Activated T-helper 1 cell treated with anti-CD3 and anti-CD28 coated beads, Interleukin-12 subunit alpha, Interleukin-12 subunit beta, Interleukin-2, Interleukin-4 antibody, amounts not matched to agents 30 ng/mL and 10 ng/mL and 1 ng/mL, durations not matched to agents 14 hours and 24 hours and 36 hours (primary cell): ENCODE measurements at regions of chr4 and their contacts with region 1.

Region 1: DNA sequence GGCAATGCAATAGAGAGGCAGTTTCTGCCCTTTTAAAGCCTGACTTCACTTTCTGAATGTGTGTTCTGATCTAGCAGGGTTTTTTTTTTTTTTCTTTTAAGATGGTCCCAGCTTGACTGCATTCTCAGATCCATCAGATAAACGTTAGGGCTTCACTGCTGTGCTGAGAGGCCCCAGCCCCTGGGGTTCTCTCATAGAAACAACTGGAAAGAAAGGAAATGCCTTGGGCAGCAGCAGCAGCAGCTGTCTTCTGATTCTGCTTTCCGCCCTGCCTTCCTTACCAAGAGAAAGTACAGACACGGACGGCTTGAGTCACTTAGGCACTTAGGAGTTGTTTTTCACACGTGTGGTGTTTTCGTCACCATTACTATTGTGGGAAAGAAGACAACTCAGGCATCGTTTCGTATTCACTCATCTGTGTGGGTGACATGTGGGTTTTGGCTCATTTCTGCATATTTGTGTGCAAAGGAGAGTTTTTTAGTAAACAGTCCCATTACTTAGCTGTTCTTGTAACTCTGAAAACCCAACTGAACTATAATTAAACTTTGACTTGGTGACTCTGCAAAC is 172.0 kb downstream of the PTTG2 start:
- DNase-seq: peak; percentile 80
- H3K4me3 Mint-ChIP-seq: peak overlapping the region; percentile 64
- H3K27ac Mint-ChIP-seq: peak overlapping the region; percentile 94
- H3K4me1 Mint-ChIP-seq: peaks cover 84% of the 10 kb centered on the region
- H3K27me3 Mint-ChIP-seq: peaks cover 3% of the 10 kb centered on the region

Region 2: GRCh38 chr4:36285784-36286480 is 1846.3 kb before region 1 on chr4:
- intact Hi-C with region 1: loop called (anchors 1 kb)
- DNase-seq: peak; percentile 79
- H3K4me3 Mint-ChIP-seq: peak overlapping the region; percentile 49
- H3K27ac Mint-ChIP-seq: peak overlapping the region; percentile 95
- H3K4me1 Mint-ChIP-seq: peaks cover 78% of the 10 kb centered on the region
- H3K27me3 Mint-ChIP-seq: peaks cover 2% of the 10 kb centered on the region

Region 3: GRCh38 chr4:37561803-37562207 is 570.4 kb before region 1 on chr4:
- intact Hi-C with region 1: no loop called
- DNase-seq: no peak
- H3K4me3 Mint-ChIP-seq: no peak overlapping the region
- H3K27ac Mint-ChIP-seq: no peak overlapping the region
- H3K4me1 Mint-ChIP-seq: no peaks in the 10 kb centered on the region
- H3K27me3 Mint-ChIP-seq: peaks cover 4% of the 10 kb centered on the region

Region 4: GRCh38 chr4:37879365-37879764 is 252.8 kb before region 1 on chr4:
- intact Hi-C with region 1: no loop called
- DNase-seq: no peak
- H3K4me3 Mint-ChIP-seq: no peak overlapping the region
- H3K27ac Mint-ChIP-seq: no peak overlapping the region
- H3K4me1 Mint-ChIP-seq: peaks cover under 1% of the 10 kb centered on the region
- H3K27me3 Mint-ChIP-seq: peaks cover 14% of the 10 kb centered on the region

Region 5: DNA sequence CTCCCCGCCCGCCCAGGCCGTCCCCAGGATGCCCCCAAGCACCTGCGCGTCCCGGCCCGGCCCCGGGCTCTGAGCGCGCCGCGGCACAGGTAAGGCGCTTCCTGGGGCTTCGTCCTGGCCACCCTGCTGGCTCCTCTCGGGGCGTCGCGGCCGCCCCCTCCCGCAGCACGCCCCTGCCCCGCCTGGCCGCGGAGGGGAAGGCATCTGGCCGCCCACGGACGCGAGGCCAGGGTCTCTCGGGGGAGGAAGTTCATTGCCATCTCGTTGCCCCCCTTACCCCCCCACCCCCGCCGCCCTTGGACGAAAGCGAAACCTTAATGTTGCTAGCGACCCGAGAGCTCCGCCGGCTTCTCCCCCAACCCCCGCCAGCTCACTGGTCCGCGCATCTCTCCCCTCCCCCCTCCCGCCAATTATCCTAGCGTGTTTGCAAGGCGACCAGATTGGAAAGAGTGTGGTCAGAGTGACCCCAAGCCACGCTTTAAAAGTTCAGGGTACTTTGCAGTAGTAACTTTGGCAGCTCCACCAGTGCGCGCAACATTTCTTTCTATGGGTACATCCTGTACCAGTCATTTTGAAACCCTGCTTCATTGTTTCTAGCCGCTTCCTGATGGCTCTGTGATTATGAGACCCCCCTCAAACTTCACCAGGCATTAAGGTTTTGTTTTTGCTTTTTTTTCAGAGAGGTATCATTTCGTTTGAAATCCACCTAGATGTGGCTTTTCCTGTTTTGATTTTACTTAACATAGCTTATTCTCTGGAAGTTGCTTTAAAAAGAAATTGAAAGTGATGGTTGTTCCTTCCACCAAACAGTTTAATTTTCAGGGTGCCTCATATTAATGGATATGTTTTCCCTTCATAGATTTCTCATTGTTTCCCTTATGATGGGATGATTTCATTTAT is 240.7 kb before region 1 on chr4:
- intact Hi-C with region 1: loop called (anchors 1 kb)
- DNase-seq: peak; percentile 53
- H3K4me3 Mint-ChIP-seq: peak overlapping the region; percentile 93
- H3K27ac Mint-ChIP-seq: peak overlapping the region; percentile 95
- H3K4me1 Mint-ChIP-seq: peaks cover 48% of the 10 kb centered on the region
- H3K27me3 Mint-ChIP-seq: peaks cover 19% of the 10 kb centered on the region

Region 6: DNA sequence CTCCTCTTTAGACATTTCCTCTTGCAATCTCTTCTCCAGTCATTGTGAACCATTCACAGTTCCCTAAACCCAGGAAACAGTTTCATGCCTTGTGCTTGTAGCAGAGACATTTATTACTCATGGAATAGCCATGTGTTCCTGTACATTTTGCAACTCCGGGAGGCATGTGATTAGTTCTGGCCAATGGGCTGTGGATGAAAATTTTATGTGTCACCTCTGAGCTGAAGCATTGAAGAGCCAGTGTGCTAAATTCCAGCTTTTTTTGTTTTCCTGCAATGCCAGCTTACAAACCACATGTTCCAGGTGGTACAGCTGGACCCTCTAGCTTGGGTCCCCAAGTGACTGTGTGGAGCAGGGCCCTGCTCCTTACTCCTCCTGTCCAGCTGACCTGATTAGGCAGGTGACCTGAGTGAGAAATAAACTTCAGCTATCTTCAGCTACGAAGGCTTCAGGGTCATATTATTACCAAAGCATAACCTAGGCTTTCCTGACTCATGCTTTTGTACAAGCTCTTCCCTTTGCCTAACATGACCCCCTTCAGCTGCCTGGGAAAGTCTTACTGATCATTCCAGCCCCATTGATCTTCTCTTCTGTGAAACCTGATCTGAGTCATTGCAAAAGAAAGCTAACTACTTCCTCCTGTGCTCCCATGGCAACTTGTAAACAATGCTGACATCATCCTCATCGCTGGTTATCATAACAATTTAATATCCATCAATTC is 28.5 kb after region 1 on chr4:
- intact Hi-C with region 1: loop called (anchors 1 kb)
- DNase-seq: peak; percentile 66
- H3K4me3 Mint-ChIP-seq: peak overlapping the region; percentile 51
- H3K27ac Mint-ChIP-seq: peak overlapping the region; percentile 90
- H3K4me1 Mint-ChIP-seq: peaks cover 80% of the 10 kb centered on the region
- H3K27me3 Mint-ChIP-seq: peaks cover 7% of the 10 kb centered on the region

Region 7: DNA sequence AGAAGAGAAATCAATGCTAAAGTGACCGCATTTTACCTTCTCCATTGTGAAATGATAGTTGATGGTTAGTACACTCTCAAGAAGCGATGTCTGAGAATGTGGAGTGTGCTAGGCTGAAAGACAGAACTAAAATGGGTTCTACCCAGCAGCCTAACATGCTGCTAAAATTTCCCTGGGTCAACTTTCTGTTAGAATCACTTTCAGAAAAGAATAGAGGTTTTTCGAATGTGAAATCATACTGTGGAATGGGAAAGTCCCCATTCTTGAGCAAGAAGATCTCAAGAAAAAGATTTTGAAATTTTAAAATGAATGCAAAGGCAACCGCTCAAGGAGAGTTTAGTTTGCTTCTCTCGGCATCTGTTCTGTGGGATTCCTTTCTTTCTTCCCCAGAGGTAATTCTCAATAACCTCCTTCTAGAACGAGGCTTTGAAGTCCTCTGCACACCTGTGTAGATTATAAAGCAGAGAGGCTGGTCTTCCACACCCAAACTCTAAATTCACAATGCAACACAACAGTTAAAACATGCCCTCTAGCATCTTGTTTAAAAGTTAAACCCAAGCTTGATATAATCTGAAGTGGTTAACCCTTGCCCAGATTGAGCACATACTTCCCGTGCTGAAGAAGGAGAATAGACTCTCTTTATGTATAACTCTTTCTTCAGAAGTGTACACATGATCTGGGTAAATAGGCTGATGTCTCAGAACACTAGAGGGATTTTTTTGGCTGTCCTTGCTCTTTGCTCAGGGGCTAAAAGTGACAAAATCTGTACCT is 323.1 kb after region 1 on chr4:
- intact Hi-C with region 1: loop called (anchors 1 kb)
- DNase-seq: no peak
- H3K4me3 Mint-ChIP-seq: peak overlapping the region; percentile 16
- H3K27ac Mint-ChIP-seq: peak overlapping the region; percentile 45
- H3K4me1 Mint-ChIP-seq: peaks cover 46% of the 10 kb centered on the region
- H3K27me3 Mint-ChIP-seq: peaks cover 4% of the 10 kb centered on the region

Region 8: GRCh38 chr4:38730830-38731646 is 598.8 kb after region 1 on chr4:
- intact Hi-C with region 1: loop called (anchors 1 kb)
- DNase-seq: peak; percentile 66
- H3K4me3 Mint-ChIP-seq: no peak overlapping the region
- H3K27ac Mint-ChIP-seq: no peak overlapping the region
- H3K4me1 Mint-ChIP-seq: peaks cover 22% of the 10 kb centered on the region
- H3K27me3 Mint-ChIP-seq: peaks cover 22% of the 10 kb centered on the region

Region 9: GRCh38 chr4:38980903-38981676 is 848.9 kb after region 1 on chr4:
- intact Hi-C with region 1: loop called (anchors 2 kb)
- DNase-seq: no peak
- H3K4me3 Mint-ChIP-seq: peak overlapping the region; percentile 25
- H3K27ac Mint-ChIP-seq: peak overlapping the region; percentile 81
- H3K4me1 Mint-ChIP-seq: peaks cover 59% of the 10 kb centered on the region
- H3K27me3 Mint-ChIP-seq: no peaks in the 10 kb centered on the region